Dorsolateral prefrontal cortex (tissue), 120 donors: ENCODE measurements at regions of chr17 and their contacts with region 1.

Region 1: DNA sequence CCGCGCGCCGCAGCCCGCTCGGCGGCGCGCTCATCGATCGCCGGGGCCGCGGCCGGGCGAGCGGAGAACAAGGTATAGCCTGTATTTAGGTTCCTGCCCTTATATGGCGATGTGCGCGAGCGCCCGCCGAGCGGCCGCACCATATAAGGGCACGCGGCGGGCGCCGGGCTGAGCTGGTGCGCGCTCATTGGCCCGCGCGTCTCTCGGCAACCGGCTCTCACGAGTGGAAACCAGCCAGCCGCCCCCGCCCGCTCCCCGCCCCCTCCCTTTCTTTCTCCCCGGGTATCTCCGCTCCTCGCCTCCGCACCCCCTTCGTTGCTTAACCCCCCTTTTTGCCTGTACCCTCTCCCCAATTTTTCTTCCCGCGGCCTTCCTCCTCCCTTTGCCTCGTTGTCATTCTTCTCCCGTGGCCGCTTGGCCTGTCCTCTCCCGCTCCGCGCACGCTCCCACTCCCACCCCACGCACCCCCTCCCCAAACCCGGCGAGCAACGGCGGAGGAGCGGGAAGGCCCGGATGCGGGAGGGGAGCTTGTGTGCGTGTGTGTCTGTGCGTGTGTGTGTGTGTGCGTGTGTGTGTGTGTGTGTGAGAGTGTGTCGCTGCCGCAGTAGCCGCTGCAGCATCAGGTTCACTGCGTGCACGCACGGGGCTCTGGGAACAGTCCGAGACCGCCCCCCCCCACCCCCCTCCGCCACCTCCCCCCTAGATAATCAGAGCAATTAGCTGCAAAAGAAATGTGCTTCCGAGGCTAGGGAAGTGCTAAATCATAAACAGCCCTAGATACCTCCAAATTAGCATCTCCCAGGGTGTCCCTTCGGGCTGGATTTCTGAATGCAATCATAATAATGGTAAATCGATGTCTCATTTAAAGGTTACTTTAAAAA is 13.5 kb upstream of the CBX8 start:
- DNase-seq: peak; percentile 52 to 78 (median 73)
- H3K4me3 ChIP-seq: peak overlapping the region in 38 of 59 donors; percentile 7 to 56 (median 34)
- H3K27ac ChIP-seq: no peak overlapping the region
- H3K27me3 ChIP-seq: peaks cover 17 to 96% (median 81%) of the 10 kb centered on the region in 45 donors
- CTCF ChIP-seq: no peak

Region 2: GRCh38 chr17:79478051-79478461 is 332.3 kb before region 1 on chr17:
- intact Hi-C with region 1: no loop called
- DNase-seq: peak in 3 of 10 donors; percentile 39 to 47 (median 41)
- H3K4me3 ChIP-seq: no peak overlapping the region
- H3K27ac ChIP-seq: peak overlapping the region in 33 of 59 donors; percentile 3 to 97 (median 44)
- H3K27me3 ChIP-seq: peaks cover 0 to 22% (median 0%) of the 10 kb centered on the region in 45 donors
- CTCF ChIP-seq: no peak

Region 3: DNA sequence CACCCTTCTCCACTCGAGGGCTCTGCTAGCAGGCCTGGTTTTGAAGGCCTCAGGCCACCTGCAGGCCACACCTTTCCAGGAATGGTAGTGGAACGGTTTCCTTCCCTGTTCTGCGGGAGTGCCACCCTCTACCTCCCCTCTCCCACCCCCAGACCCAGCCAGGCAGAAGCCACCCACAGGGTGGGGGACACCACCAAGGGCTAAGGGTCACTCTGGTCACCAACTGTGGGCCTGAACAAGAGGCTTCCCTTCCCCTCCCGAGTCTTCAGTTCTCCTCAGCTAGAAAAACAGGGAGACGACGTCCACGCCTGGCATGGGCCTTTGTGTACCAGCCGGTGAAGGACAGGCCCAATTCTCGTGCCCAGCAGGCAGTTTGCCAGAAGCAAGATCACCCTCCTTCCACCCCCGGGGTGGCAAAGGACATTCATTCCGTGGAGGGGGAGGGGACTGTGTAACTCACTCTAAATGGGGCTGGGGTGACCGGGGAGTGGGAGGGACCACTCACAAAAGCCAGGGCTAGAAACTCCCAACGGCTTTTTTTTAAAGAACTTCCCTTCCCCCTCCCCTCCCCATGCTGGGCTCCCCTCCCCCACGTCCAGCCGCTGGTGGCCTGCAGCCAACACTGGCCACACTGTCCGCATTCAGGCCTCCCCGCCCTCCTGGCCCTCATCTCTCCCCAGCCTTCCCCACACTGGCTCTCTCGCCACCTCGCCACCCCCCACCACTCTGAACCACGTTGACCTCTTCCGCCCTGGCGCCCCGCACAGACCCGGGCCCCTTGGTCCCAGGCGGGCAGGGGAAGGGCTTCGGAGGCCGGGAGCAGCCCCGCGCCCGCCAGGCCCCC is 21.2 kb after region 1 on chr17:
- intact Hi-C with region 1: loop called (anchors 2 kb)
- DNase-seq: peak in 9 of 10 donors; percentile 77 to 85 (median 81)
- H3K4me3 ChIP-seq: peak overlapping the region in 54 of 59 donors; percentile 12 to 61 (median 38)
- H3K27ac ChIP-seq: peak overlapping the region in 44 of 59 donors; percentile 12 to 83 (median 60)
- H3K27me3 ChIP-seq: no peaks in the 10 kb centered on the region
- CTCF ChIP-seq: peak in 5 of 56 donors; percentile 5 to 13 (median 10)